ENCODE measurements at regions of chr7 and their contacts with region 1.

Region 1: DNA sequence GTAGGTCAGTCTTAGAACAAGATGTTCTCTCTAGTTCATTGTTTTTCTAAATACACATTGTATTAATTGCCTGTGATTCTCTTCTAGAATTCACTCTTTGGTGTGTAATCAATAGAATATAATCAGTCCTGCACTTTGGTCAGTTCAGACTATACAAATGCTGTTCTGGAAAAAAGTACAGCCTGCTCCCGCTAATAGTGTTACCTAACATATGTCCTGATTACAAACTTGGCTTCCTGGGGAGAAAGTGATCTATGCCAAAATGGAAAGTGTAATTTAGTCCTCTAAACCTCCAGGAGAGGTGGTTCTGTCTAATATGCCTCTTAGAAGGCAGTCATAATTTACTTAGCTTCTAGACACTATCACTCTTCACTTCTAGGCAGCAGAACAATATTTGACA is 215.5 kb downstream of the SEMA3D start:
- DNase-seq: no peak
- H3K4me3 ChIP-seq: no peak overlapping the region
- H3K27ac ChIP-seq: no peak overlapping the region
- H3K4me1 ChIP-seq: no peaks in the 10 kb centered on the region
- H3K27me3 ChIP-seq: no peaks in the 10 kb centered on the region
- CTCF ChIP-seq: no peak

Region 2: DNA sequence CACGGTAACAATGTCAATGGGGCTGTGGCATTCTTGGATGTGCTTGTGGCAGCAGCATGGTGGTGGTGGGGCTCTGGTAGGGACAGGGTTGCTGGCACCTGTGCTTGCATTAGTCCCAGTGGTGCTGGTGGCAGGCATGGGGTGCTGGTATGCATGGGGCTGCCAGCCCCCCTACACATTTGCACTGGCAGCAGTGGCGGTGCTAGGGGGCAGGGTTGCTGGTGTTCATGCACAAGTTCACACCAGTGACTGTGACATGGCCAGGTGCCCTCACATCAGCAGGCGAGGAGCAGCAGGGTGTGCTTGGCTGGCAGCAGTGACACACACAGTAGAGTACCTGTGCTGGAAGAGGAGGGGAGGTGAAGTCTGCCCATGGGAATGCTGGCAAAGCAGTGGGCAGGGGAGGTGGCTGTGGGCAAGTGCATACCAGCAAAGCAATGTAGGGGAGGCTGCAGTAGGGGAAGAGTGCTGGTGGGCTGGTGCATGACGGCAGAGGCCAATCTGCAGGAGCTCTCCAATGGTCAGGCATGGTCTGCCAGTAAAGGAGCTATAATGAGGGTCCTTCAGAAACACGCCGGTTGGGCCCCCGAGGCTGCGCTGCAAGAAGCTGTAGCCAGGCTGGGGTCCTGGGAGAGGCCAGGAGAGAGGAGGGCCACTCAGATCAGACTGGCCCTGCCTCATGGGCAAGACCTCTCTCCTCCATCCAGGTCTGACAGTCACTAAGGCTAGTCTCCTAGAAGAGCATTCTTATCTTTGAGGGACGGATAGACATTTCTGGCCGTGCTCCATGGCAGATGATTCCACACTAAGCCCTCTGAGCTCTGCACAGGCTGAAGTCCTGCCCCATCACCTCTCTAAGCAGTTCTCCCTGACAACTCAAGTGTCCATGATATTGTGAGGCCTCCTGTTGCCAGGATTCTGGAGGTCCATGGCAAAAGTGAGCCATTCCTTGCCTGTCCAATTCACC is 190.9 kb before region 1 on chr7:
- CTCF ChIA-PET with region 1: no interaction called
- dilution Hi-C with region 1: no loop called
- in situ Hi-C with region 1: no loop called
- intact Hi-C with region 1: no loop called
- DNase-seq: no peak
- H3K4me3 ChIP-seq: no peak overlapping the region
- H3K27ac ChIP-seq: no peak overlapping the region
- H3K4me1 ChIP-seq: no peaks in the 10 kb centered on the region
- H3K27me3 ChIP-seq: no peaks in the 10 kb centered on the region
- CTCF ChIP-seq: no peak

Region 3: GRCh38 chr7:84939440-84940287 is 31.7 kb before region 1 on chr7:
- CTCF ChIA-PET with region 1: no interaction called
- dilution Hi-C with region 1: loop called (anchors 5 kb)
- in situ Hi-C with region 1: no loop called
- intact Hi-C with region 1: no loop called
- DNase-seq: no peak
- H3K4me3 ChIP-seq: peak overlapping the region in 1 of 3 experiments; percentile 6
- H3K27ac ChIP-seq: no peak overlapping the region
- H3K4me1 ChIP-seq: no peaks in the 10 kb centered on the region
- H3K27me3 ChIP-seq: no peaks in the 10 kb centered on the region
- CTCF ChIP-seq: no peak

Region 4: GRCh38 chr7:85535974-85536729 is 564.8 kb after region 1 on chr7:
- CTCF ChIA-PET with region 1: no interaction called
- dilution Hi-C with region 1: no loop called
- in situ Hi-C with region 1: no loop called
- intact Hi-C with region 1: no loop called
- DNase-seq: no peak
- H3K4me3 ChIP-seq: no peak overlapping the region
- H3K27ac ChIP-seq: no peak overlapping the region
- H3K4me1 ChIP-seq: no peaks in the 10 kb centered on the region
- H3K27me3 ChIP-seq: no peaks in the 10 kb centered on the region
- CTCF ChIP-seq: no peak